GM12878 (cell line): ENCODE measurements at regions of chr17 and their contacts with region 1.

Region 1: GRCh38 chr17:28726226-28727130 is at the start of gene TLCD1:
- DNase-seq: no peak
- ATAC-seq: peak; percentile 44
- H3K4me3 ChIP-seq: peak within 1 kb of the TSS; percentile 72
- H3K27ac ChIP-seq: peak within 1 kb of the TSS; percentile 94
- H3K4me1 ChIP-seq: peaks cover 23% of the 10 kb centered on the region
- H3K27me3 ChIP-seq: no peaks in the 10 kb centered on the region
- CTCF ChIP-seq: peak; percentile 99 to 100 (median 99); a peak in 5 of 6 replicates
- EP300 ChIP-seq: no peak
- POLR2A ChIP-seq: no peak; the same call in 1 of the 2 replicates
- RAD21 ChIP-seq: peak; percentile 98
- polyA plus RNA-seq, gene TLCD1: 2.9 to 7.1 TPM

Region 2: GRCh38 chr17:27455914-27456680 is 1270.4 kb before region 1 on chr17 and contains the start of gene KSR1:
- CTCF ChIA-PET with region 1: no interaction called
- POLR2A ChIA-PET with region 1: no interaction called
- RAD21 ChIA-PET with region 1: no interaction called
- SMC1A ChIA-PET with region 1: no interaction called
- in situ Hi-C with region 1: loop called (anchors 25 kb)
- intact Hi-C with region 1: no loop called
- DNase-seq: no peak
- ATAC-seq: peak; percentile 89
- H3K4me3 ChIP-seq: peak within 1 kb of the TSS; percentile 89
- H3K27ac ChIP-seq: peak within 1 kb of the TSS; percentile 38
- H3K4me1 ChIP-seq: peaks cover 16% of the 10 kb centered on the region
- H3K27me3 ChIP-seq: no peaks in the 10 kb centered on the region
- CTCF ChIP-seq: peak; percentile 38 to 56 (median 42); a peak in 5 of 6 replicates
- EP300 ChIP-seq: no peak
- POLR2A ChIP-seq: peak; percentile 75
- RAD21 ChIP-seq: peak; percentile 44
- polyA plus RNA-seq, gene KSR1: 0.97 to 1.7 TPM

Region 3: GRCh38 chr17:28612936-28613872 is 113.3 kb before region 1 on chr17:
- CTCF ChIA-PET with region 1: no interaction called
- POLR2A ChIA-PET with region 1: no interaction called
- RAD21 ChIA-PET with region 1: no interaction called
- SMC1A ChIA-PET with region 1: no interaction called
- in situ Hi-C with region 1: no loop called
- intact Hi-C with region 1: no loop called
- DNase-seq: no peak
- ATAC-seq: peak; percentile 87
- H3K4me3 ChIP-seq: no peak overlapping the region
- H3K27ac ChIP-seq: no peak overlapping the region; the same call in 1 of the 2 replicates
- H3K4me1 ChIP-seq: no peaks in the 10 kb centered on the region; the same call in none of the 2 replicates
- H3K27me3 ChIP-seq: no peaks in the 10 kb centered on the region
- CTCF ChIP-seq: peak; percentile 62 to 75 (median 69)
- EP300 ChIP-seq: no peak
- POLR2A ChIP-seq: 0 out of 2 replicates have a peak, but pooled peaks have one; percentile 5
- RAD21 ChIP-seq: peak; percentile 69

Region 4: DNA sequence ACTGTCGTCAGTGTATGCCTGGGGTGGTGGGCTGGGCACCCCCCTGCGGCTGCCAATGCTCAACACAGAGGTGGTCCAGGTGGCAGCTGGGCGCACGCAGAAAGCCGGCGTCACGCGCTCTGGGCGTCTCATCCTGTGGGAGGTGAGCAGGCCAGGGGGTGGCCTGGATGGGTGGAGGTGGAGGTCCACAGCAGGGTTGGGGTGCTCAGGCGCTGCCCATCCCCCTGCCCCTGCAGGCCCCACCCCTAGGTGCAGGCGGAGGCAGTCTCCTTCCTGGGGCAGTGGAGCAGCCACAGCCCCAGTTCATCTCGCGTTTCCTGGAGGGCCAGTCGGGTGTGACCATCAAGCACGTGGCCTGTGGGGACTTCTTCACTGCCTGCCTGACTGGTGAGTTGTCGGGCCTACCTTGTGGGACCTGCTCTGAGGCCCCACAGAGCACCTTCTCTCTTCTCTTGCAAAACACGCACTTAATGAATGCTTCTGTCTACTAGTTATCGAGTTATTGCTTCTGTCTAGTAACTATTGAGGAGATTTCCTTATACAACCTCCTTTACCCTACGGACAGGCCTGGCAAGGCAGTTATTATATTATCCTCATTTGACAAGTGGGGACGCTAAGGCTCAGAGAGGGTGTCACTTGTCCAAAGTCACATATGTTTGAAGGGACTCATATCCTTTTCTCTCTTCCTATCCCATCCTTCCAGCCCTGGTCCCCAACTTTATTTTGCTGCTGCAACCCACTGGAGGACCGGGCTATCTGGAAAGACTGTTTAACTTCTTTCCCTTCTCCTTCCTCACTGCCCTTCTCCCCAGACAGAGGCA is 11.6 kb after region 1 on chr17:
- CTCF ChIA-PET with region 1: interaction called, 95 read pairs
- POLR2A ChIA-PET with region 1: interaction called, 485 read pairs
- RAD21 ChIA-PET with region 1: interaction called, 375 read pairs
- SMC1A ChIA-PET with region 1: interaction called, 326 read pairs
- in situ Hi-C with region 1: no loop called
- intact Hi-C with region 1: loop called (anchors 1 kb)
- DNase-seq: peak; percentile 89
- ATAC-seq: peak; percentile 88
- H3K4me3 ChIP-seq: peak overlapping the region; percentile 60
- H3K27ac ChIP-seq: peak overlapping the region; percentile 96
- H3K4me1 ChIP-seq: peaks cover 75% of the 10 kb centered on the region
- H3K27me3 ChIP-seq: no peaks in the 10 kb centered on the region
- CTCF ChIP-seq: no peak
- EP300 ChIP-seq: peak; percentile 45 to 73; a peak in 3 of 4 replicates
- POLR2A ChIP-seq: peak; percentile 83
- RAD21 ChIP-seq: no peak

Region 5: DNA sequence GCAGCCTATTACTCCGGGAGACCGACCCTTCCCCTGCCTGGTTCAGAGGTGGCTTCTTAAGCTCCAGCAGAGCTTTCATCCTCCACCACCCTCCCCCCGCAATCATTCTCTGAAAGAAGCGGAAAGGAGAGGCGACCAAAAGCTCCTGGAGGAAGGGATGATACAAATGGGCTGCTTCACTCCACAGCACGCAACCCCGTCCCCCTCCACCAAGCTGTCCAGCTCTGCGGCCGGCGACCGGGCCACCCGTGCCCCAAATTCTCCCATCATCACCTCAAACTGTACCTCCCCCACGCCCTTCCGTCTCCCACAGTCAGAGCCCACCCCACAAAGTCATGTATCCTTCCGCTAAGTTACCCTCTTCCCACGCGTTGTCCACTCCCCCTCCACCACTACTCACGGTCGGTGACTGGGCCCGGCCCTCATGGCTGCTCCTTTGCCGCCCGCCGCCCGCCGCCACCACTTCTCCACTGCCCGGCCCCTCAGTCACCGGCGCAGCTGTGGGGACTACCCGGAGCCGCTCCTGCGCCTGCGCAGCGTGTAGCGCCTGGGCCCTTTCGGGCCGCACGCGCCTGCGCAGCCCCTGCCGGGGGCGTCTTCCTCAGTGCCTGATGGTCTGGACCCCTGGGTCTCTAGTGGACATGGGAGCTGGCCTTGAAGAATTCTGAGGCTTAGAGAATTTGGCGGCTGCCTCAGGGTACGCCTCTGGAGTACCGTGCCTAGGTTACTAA is 116.0 kb after region 1 on chr17 and contains the start of gene FAM222B:
- CTCF ChIA-PET with region 1: interaction called, 11 read pairs
- POLR2A ChIA-PET with region 1: interaction called, 13 read pairs
- RAD21 ChIA-PET with region 1: interaction called, 12 read pairs
- SMC1A ChIA-PET with region 1: interaction called, 9 read pairs
- in situ Hi-C with region 1: no loop called
- intact Hi-C with region 1: loop called (anchors 5 kb)
- DNase-seq: peak; percentile 51
- ATAC-seq: peak; percentile 99
- H3K4me3 ChIP-seq: peak within 1 kb of the TSS; percentile 98
- H3K27ac ChIP-seq: peak within 1 kb of the TSS; percentile 59
- H3K4me1 ChIP-seq: no peaks in the 10 kb centered on the region
- H3K27me3 ChIP-seq: no peaks in the 10 kb centered on the region
- CTCF ChIP-seq: 0 out of 6 replicates have a peak, but pooled peaks of 1 of the 3 experiments have one; percentile 1
- EP300 ChIP-seq: no peak
- POLR2A ChIP-seq: peak; percentile 87
- RAD21 ChIP-seq: no peak
- polyA plus RNA-seq, gene FAM222B: 2.8 to 2.9 TPM

Region 6: GRCh38 chr17:28889996-28890395 is 163.5 kb after region 1 on chr17:
- CTCF ChIA-PET with region 1: interaction called, 31 read pairs
- POLR2A ChIA-PET with region 1: interaction called, 15 read pairs
- RAD21 ChIA-PET with region 1: interaction called, 22 read pairs
- SMC1A ChIA-PET with region 1: interaction called, 35 read pairs
- in situ Hi-C with region 1: no loop called
- intact Hi-C with region 1: loop called (anchors 2 kb)
- DNase-seq: no peak
- ATAC-seq: no peak
- H3K4me3 ChIP-seq: no peak overlapping the region
- H3K27ac ChIP-seq: no peak overlapping the region
- H3K4me1 ChIP-seq: peaks cover 59% of the 10 kb centered on the region
- H3K27me3 ChIP-seq: no peaks in the 10 kb centered on the region
- CTCF ChIP-seq: no peak
- EP300 ChIP-seq: no peak
- POLR2A ChIP-seq: no peak
- RAD21 ChIP-seq: no peak

Region 7: GRCh38 chr17:28946239-28946638 is 219.8 kb after region 1 on chr17:
- CTCF ChIA-PET with region 1: interaction called, 63 read pairs
- POLR2A ChIA-PET with region 1: interaction called, 22 read pairs
- RAD21 ChIA-PET with region 1: interaction called, 27 read pairs
- SMC1A ChIA-PET with region 1: interaction called, 28 read pairs
- in situ Hi-C with region 1: no loop called
- intact Hi-C with region 1: no loop called
- DNase-seq: no peak
- ATAC-seq: no peak
- H3K4me3 ChIP-seq: 0 out of 2 replicates have a peak overlapping the region, but pooled peaks have one; percentile 53
- H3K27ac ChIP-seq: peak overlapping the region; percentile 15; the same call in 1 of the 2 replicates
- H3K4me1 ChIP-seq: peaks cover 13% of the 10 kb centered on the region
- H3K27me3 ChIP-seq: no peaks in the 10 kb centered on the region
- CTCF ChIP-seq: no peak
- EP300 ChIP-seq: no peak
- POLR2A ChIP-seq: no peak
- RAD21 ChIP-seq: no peak

Region 8: DNA sequence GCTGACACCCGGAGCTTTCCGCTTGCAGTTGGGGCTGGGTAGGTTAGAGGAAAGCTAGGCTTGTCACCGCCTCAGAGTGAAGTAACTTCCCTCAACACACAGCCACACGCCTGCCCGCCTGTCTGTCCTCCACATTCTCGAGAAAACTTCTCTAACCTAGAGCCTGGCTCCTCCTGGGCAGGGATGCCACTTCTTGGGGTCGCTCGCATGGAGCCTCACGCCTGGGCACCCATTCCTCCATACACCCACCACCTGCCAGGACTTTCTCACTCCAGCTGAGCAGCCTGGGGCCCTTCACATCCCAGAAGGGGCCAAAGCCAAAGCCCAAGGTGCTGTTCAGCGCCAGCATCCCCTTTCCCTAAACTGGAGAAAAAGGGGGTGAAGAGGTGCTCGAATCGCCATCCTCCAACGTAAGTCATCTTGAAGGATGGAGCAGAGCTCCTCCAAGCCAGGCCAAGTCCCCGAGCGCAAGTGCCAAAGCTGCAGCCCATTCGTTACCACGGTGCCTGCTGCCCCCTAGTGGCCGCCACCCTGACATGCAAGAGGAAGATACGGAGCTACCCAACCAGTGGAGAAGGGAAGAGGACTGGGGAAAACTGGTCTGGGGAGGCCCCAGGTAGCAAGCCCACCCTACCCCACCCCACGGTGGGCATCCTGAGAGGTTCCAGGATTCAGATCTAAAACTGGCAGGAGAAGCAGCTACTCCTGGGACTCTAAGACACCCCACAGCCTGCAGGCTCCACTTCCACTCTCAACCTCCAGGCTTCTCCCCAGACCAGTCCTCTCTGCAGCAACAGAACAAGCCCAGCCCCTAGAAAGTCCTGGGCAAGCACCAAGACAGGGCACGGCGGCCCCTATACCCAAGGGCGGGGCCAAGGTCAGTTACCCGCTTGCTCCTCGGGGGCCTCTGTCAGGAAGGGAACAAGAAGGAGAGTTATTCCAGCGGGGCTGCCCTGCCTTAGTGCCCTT is 390.6 kb after region 1 on chr17:
- CTCF ChIA-PET with region 1: interaction called, 15 read pairs
- POLR2A ChIA-PET with region 1: no interaction called
- RAD21 ChIA-PET with region 1: interaction called, 5 read pairs
- SMC1A ChIA-PET with region 1: interaction called, 5 read pairs
- in situ Hi-C with region 1: no loop called
- intact Hi-C with region 1: loop called (anchors 10 kb)
- DNase-seq: peak; percentile 5
- ATAC-seq: peak; percentile 89
- H3K4me3 ChIP-seq: no peak overlapping the region
- H3K27ac ChIP-seq: no peak overlapping the region
- H3K4me1 ChIP-seq: no peaks in the 10 kb centered on the region
- H3K27me3 ChIP-seq: no peaks in the 10 kb centered on the region
- CTCF ChIP-seq: peak; percentile 90 to 95 (median 92)
- EP300 ChIP-seq: no peak
- POLR2A ChIP-seq: no peak
- RAD21 ChIP-seq: peak; percentile 70